ENCODE measurements at regions of chr2 and their contacts with region 1.

Region 1: DNA sequence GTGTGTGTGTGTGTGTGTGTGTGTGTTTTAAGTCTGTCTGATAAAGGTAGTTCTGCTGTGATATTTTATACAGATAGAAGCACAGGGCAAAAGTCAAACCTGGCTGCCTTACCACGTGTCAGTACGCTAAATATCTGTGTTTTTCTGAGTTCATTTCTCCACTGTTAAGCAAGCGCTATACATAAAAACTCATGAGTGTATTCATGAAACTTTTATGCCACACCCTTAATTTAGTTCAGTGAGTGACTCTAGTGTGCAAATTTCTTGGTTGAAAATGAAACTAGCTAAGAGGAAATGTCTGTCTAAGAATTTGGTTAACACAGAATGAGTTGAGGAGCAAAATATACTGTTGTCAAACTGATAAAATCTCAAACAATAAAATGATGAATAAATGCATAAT is 11.2 kb downstream of the CASP10 start:
- DNase-seq: peak in 2 of 3 donors; percentile 67 to 74
- H3K4me3 ChIP-seq: peak overlapping the region in 4 of 7 experiments; percentile 3 to 53 (median 22)
- H3K27ac ChIP-seq: peak overlapping the region in 1 of 2 experiments; percentile 65
- H3K4me1 ChIP-seq: peaks cover 43 to 77% (median 58%) of the 10 kb centered on the region in 4 experiments
- H3K27me3 ChIP-seq: no peaks in the 10 kb centered on the region

Region 2: DNA sequence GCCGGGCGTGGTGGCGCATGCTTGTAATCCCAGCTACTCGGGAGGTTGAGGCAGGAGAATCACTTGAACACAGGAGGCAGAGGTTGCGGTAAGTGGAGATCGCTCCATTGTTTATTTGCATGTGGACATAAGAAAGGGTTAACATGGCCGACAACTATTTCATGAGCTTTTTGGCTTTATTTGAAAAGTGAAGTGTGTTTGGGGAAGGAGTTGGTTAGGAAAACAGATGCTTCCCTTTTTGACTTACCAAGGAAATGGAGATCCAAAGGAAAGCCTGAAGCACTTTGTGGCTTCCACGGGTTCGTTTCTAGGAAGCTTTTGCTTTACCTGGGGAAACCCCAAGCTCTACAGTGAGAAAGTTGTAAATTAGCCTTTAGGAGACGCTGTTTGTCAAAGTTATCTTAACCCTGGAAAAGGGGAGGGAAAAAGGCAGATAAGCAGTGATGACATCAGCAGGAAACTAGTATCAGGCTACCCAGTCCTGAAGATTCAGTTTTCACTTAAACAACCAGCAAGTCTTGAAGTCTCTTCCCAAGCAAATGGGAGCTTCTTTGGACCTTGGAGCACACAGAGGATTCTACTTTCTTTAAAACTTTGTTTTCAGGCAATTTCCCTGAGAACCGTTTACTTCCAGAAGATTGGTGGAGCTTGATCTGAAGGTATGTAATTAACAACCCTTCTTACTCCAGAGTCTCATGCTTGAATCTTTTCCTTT is 11.3 kb before region 1 on chr2 and contains the start of gene CASP10:
- CTCF ChIA-PET with region 1: interaction called, 28 read pairs
- POLR2A ChIA-PET with region 1: interaction called, 8 read pairs
- DNase-seq: peak; percentile 92 to 95 (median 95)
- H3K4me3 ChIP-seq: peak within 1 kb of the TSS; percentile 14 to 100 (median 79)
- H3K27ac ChIP-seq: peak within 1 kb of the TSS; percentile 78 to 90
- H3K4me1 ChIP-seq: peaks cover 29 to 46% (median 30%) of the 10 kb centered on the region in 4 experiments
- H3K27me3 ChIP-seq: no peaks in the 10 kb centered on the region

Region 3: DNA sequence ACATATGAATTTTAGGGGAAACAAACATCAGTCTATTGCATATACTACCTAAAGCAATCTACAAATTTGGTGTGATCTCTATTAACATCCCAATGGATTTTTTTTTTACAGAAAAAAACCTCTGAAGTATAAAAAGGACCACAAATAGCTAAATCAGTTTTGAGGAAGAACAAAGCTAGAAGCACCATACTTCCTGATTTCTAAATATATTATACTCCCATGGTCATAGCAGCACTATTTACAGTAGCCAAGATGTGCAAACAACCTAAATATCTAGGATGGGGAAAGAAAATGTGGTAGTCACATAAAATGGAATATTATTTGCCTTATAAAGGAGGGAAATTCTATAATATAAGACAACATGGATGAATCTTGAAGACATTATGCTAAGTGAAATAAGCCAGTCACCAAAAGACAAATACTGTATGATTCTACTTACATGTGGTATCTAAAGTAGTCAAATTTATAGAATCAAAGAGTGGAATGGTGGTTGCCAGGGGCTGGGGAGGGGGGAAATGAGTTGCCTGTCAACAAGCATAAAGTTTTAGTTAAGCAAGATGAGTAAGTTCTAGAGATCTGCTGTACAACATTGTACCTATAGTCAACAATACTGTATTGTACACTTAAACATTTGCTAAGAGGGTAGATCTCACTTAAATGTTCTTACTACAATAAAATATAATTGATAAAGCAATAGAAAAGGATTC is 48.6 kb after region 1 on chr2:
- CTCF ChIA-PET with region 1: no interaction called
- POLR2A ChIA-PET with region 1: no interaction called
- DNase-seq: no peak
- H3K4me3 ChIP-seq: no peak overlapping the region
- H3K27ac ChIP-seq: peak overlapping the region in 1 of 2 experiments; percentile 25
- H3K4me1 ChIP-seq: peaks cover 15 to 29% (median 22%) of the 10 kb centered on the region in 4 experiments
- H3K27me3 ChIP-seq: no peaks in the 10 kb centered on the region